ENCODE measurements at regions of chr3 and their contacts with region 1.

Region 1: DNA sequence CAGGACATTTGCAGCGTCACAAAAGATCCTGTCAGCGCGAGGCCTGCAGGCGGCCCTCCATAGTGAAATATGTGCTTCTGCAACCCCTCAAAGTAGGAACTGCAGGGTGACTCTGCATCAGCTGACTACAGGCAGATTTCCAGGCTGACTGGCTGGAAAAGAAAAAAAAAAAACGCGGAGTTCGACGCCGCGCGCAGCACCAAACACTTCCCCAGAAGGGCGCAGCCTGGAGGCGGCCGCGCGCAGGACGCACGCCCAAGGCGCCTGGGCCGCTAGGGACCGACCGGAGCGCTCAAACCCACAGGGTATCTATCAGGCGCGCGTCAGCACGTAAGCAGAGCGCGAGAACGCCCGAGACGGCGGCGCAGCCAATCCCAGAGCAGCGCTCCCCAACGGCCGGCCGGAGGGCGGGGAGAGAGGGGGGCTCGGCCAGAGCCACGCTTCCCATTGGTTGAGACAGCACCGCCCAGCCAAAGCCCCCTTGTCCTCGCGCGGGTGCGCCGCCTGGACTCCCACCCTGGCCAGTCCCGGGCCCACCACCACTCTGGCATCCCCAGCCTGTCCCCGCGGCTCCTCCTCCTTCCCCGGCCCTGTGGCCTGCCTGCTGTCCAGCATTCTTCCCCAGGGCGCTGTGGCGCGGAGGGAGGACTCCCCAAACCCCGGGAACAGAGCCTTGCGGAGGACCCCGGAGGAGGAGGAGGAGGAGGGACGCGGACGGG is 1.0 kb downstream of the BDH1 start:
- DNase-seq: peak; percentile 95
- ATAC-seq: peak; percentile 99
- H3K4me3 ChIP-seq: peak overlapping the region; percentile 80
- H3K27ac ChIP-seq: peak overlapping the region; percentile 76
- H3K4me1 ChIP-seq: peaks cover 4% of the 10 kb centered on the region
- H3K27me3 ChIP-seq: peaks cover 19% of the 10 kb centered on the region
- CTCF ChIP-seq: peak; percentile 74
- POLR2A ChIP-seq: no peak
- RAD21 ChIP-seq: peak; percentile 51

Region 2: GRCh38 chr3:197224034-197224444 is 330.7 kb before region 1 on chr3:
- CTCF ChIA-PET with region 1: no interaction called
- POLR2A ChIA-PET with region 1: no interaction called
- dilution Hi-C with region 1: no loop called
- in situ Hi-C with region 1: no loop called
- intact Hi-C with region 1: loop called (anchors 1 kb)
- DNase-seq: peak; percentile 67
- ATAC-seq: peak; percentile 79
- H3K4me3 ChIP-seq: no peak overlapping the region
- H3K27ac ChIP-seq: no peak overlapping the region
- H3K4me1 ChIP-seq: peaks cover 2% of the 10 kb centered on the region
- H3K27me3 ChIP-seq: no peaks in the 10 kb centered on the region
- CTCF ChIP-seq: peak; percentile 65
- POLR2A ChIP-seq: 0 out of 2 replicates have a peak, but pooled peaks have one; percentile 23
- RAD21 ChIP-seq: peak; percentile 78

Region 3: GRCh38 chr3:197501879-197502620 is 52.7 kb before region 1 on chr3:
- CTCF ChIA-PET with region 1: no interaction called
- POLR2A ChIA-PET with region 1: no interaction called
- dilution Hi-C with region 1: no loop called
- in situ Hi-C with region 1: no loop called
- intact Hi-C with region 1: no loop called
- DNase-seq: peak; percentile 26
- ATAC-seq: peak; percentile 79
- H3K4me3 ChIP-seq: no peak overlapping the region
- H3K27ac ChIP-seq: no peak overlapping the region
- H3K4me1 ChIP-seq: peaks cover 3% of the 10 kb centered on the region
- H3K27me3 ChIP-seq: 0 out of 2 replicates have a peak, but pooled peaks cover 1% of the 10 kb centered on the region
- CTCF ChIP-seq: peak; percentile 52
- POLR2A ChIP-seq: no peak
- RAD21 ChIP-seq: peak; percentile 66